Activated CD8-positive, alpha-beta memory T cell treated with anti-CD3 and anti-CD28 coated beads, Interleukin-2, amount 10 ng/mL, durations not matched to agents 7 days and 5 days (primary cell): ENCODE measurements at regions of chr22 and their contacts with region 1.

Region 1: DNA sequence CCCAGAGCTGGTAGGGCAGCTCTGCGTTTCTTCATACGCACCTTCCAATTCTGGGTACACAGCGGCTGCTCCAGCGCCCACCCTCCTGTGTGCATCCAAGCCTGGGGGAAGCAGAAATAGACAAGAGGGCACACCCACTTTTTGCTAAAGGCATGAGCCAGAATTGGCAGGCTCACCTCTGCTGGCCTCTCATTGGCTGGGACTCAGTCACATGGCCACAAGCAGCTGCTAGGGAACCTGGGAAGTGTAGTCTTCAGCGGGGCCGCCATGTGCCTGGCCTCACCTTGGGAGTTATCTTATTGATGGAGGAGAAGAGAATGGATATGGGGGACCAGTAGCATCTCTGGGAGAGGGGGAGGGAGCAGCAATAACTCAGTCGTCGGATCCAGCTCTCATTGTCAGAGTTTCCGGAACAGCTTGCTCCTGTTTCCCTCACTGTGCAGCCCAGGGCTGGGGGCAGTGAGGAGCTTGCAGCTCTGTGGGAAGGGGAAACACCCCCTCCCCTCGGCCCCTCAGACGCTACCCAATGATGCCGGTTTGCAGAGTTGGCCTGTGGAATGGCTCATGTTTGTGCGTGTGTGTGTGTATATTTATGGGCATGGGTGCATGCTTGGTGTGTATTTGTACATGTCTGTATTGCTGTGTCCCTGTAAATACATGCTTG is 11.8 kb upstream of the MIEF1 start:
- DNase-seq: peak; percentile 88
- ATAC-seq: peak; percentile 99
- H3K4me3 Mint-ChIP-seq: no peak overlapping the region
- H3K27ac Mint-ChIP-seq: no peak overlapping the region
- H3K4me1 Mint-ChIP-seq: peaks cover 18% of the 10 kb centered on the region
- H3K27me3 Mint-ChIP-seq: no peaks in the 10 kb centered on the region

Region 2: DNA sequence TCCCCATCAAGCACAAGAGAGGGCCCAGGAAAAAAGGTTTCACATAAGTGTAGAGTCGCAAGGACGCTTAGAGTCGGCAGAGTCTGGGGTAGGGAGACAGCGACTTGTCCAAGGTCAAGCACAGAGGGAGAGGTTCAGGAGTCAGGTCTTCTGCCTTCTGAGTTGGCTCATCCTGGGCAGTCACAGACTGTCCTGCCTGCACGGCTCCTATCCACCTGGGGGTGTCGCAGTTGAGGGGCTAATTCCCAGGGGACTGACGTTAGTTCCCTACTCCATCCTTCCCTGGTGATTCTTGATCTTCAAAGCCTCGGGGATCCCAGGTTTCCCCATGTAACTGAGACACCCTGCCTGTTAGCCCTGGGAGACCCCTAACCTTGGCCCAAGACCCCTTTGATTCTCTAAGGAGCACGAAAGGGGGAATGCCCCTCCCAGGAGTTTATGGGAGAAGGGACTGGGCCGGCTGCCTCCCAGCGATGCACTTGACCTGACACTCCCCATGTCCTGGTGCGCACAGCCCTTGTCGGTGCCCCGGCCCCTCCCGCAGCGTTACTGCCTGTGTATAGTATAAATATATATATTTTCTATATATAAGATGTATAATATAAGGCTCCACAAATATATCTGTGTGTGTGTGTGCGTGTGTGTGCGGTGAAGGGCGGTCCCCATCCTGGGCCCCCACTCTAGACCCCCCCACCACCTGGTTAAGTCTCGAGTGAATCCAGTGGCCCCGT is 105.4 kb before region 1 on chr22:
- CTCF ChIA-PET with region 1: no interaction called
- DNase-seq: no peak
- ATAC-seq: no peak
- H3K4me3 Mint-ChIP-seq: no peak overlapping the region
- H3K27ac Mint-ChIP-seq: no peak overlapping the region
- H3K4me1 Mint-ChIP-seq: peaks cover 19% of the 10 kb centered on the region
- H3K27me3 Mint-ChIP-seq: no peaks in the 10 kb centered on the region

Region 3: GRCh38 chr22:39502109-39502788 is 12.0 kb after region 1 on chr22 and contains the start of gene MIEF1:
- CTCF ChIA-PET with region 1: interaction called, 134 read pairs
- DNase-seq: peak; percentile 97
- ATAC-seq: peak; percentile 98
- H3K4me3 Mint-ChIP-seq: peak within 1 kb of the TSS; percentile 88
- H3K27ac Mint-ChIP-seq: peak within 1 kb of the TSS; percentile 94
- H3K4me1 Mint-ChIP-seq: peaks cover 31% of the 10 kb centered on the region
- H3K27me3 Mint-ChIP-seq: peaks cover 4% of the 10 kb centered on the region
- total RNA-seq, gene MIEF1: 40.6 to 45.7 TPM

Region 4: DNA sequence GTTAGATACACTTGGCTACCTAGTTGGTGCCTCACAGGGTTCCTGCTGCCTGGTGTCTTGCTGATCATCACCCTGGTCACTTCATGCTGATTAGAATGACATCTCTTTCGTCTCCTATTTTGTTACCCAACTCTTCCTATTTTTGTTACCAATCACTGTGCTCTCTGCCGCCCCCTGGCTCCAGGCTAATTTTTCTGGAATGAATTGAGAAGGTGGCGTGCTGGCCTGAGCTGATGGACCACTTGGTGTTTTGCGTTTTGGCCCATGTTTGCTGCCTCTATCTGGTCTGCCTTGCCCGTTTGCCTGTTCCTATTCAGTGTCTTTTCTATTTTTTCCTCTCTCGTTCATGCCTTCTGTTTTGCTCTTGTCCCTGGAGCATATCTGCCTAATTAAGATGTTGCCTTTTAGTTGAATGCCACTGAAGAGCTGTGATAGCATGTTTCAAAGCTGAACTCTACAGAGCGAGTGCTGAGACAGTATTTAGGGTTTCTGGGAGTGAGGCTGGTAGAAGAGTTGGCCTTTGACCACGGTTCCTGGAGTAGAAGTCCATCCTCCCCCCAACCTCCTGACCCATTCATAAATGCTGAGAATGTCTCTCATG is 24.2 kb after region 1 on chr22:
- CTCF ChIA-PET with region 1: interaction called, 134 read pairs
- DNase-seq: peak; percentile 68
- ATAC-seq: no peak
- H3K4me3 Mint-ChIP-seq: no peak overlapping the region
- H3K27ac Mint-ChIP-seq: no peak overlapping the region
- H3K4me1 Mint-ChIP-seq: peaks cover 34% of the 10 kb centered on the region
- H3K27me3 Mint-ChIP-seq: no peaks in the 10 kb centered on the region

Region 5: DNA sequence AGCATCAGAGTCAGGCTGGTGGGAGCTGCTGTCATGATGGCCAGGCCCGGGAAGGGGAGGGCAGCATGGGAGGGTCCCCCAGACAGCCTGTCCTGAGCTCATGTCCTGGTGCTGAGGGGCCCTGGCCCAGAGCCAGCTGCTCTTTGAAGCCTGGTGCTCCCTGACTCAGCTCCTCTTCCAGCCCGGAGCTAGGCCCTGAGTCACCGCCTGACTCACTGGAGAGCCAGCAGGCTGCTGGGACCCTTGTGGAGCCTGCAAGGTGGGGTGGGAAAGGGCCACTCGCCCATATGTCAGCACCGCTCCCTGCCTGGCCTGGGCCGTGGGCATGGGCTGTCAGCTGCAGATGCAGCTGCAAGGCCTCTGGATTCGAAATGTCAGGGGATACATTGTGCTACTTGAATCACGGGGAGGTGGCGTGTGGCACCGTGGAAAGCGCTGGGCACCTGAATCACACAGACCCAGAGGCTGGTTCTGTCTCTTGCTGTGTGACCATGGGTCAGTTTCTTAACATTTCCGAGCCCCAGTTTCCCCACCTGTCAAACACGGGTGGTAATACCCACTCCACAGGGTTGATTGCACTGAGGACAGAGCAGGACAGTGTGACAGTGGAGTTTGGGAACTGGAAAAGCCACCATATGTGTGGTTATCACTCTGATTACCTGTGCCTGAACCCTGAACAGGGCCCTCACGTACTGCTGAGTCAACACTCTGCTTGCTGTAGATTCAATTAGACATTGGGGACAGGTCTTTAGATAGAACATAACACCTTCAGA is 84.7 kb after region 1 on chr22:
- CTCF ChIA-PET with region 1: no interaction called
- DNase-seq: no peak
- ATAC-seq: no peak
- H3K4me3 Mint-ChIP-seq: no peak overlapping the region
- H3K27ac Mint-ChIP-seq: no peak overlapping the region
- H3K4me1 Mint-ChIP-seq: no peaks in the 10 kb centered on the region
- H3K27me3 Mint-ChIP-seq: peaks cover 33% of the 10 kb centered on the region